Tibial artery (tissue), 4 donors: ENCODE measurements at regions of chr1 and their contacts with region 1.

Region 1: GRCh38 chr1:61436016-61436415 is 288.9 kb downstream of the TM2D1 start:
- DNase-seq: no peak
- H3K4me3 ChIP-seq: no peak overlapping the region
- H3K27ac ChIP-seq: peak overlapping the region; percentile 30 to 55
- H3K4me1 ChIP-seq: peaks cover 0 to 25% (median 9%) of the 10 kb centered on the region in 4 donors
- H3K27me3 ChIP-seq: no peaks in the 10 kb centered on the region
- CTCF ChIP-seq: no peak

Region 2: GRCh38 chr1:61313906-61314422 is 122.1 kb before region 1 on chr1:
- intact Hi-C with region 1: no loop called
- DNase-seq: no peak
- H3K4me3 ChIP-seq: no peak overlapping the region
- H3K27ac ChIP-seq: no peak overlapping the region
- H3K4me1 ChIP-seq: peaks cover 0 to 25% (median under 1%) of the 10 kb centered on the region in 4 donors
- H3K27me3 ChIP-seq: no peaks in the 10 kb centered on the region
- CTCF ChIP-seq: no peak

Region 3: GRCh38 chr1:61352845-61353435 is 83.1 kb before region 1 on chr1:
- intact Hi-C with region 1: loop called (anchors 10 kb)
- DNase-seq: no peak
- H3K4me3 ChIP-seq: no peak overlapping the region
- H3K27ac ChIP-seq: no peak overlapping the region
- H3K4me1 ChIP-seq: peaks cover 0 to 8% (median 2%) of the 10 kb centered on the region in 4 donors
- H3K27me3 ChIP-seq: no peaks in the 10 kb centered on the region
- CTCF ChIP-seq: no peak